ENCODE measurements at regions of chr9 and their contacts with region 1.

Region 1: GRCh38 chr9:95225076-95225725 is 92.3 kb downstream of the FANCC start:
- DNase-seq: no peak
- H3K4me3 Mint-ChIP-seq: no peak overlapping the region
- H3K27ac Mint-ChIP-seq: no peak overlapping the region
- H3K4me1 Mint-ChIP-seq: no peaks in the 10 kb centered on the region
- H3K27me3 Mint-ChIP-seq: no peaks in the 10 kb centered on the region
- CTCF ChIP-seq: no peak

Region 2: GRCh38 chr9:94900222-94901018 is 324.8 kb before region 1 on chr9:
- CTCF ChIA-PET with region 1: no interaction called
- intact Hi-C with region 1: no loop called
- DNase-seq: no peak
- H3K4me3 Mint-ChIP-seq: peak overlapping the region; percentile 43
- H3K27ac Mint-ChIP-seq: peak overlapping the region; percentile 91
- H3K4me1 Mint-ChIP-seq: peaks cover 40% of the 10 kb centered on the region
- H3K27me3 Mint-ChIP-seq: no peaks in the 10 kb centered on the region
- CTCF ChIP-seq: no peak

Region 3: DNA sequence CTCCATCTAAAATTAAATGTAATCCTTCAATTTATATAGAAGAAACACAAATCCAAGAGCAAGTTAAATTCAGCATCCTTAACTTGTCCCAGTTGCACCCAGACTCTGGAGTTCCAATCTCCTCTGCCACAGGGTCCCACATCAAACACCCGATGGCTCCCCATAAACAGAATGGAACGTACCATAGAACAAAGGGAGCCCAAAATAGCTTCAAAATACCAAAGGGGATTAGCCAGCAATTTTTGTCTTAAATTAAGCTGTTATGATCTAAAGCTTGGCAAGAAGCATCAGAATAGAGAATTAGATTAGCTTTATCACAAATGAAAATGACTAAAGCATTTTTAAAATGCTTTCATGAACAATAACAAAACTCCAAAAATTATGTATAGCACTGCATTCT is 20.5 kb before region 1 on chr9:
- CTCF ChIA-PET with region 1: no interaction called
- intact Hi-C with region 1: loop called (anchors 1 kb)
- DNase-seq: no peak
- H3K4me3 Mint-ChIP-seq: no peak overlapping the region
- H3K27ac Mint-ChIP-seq: no peak overlapping the region
- H3K4me1 Mint-ChIP-seq: no peaks in the 10 kb centered on the region
- H3K27me3 Mint-ChIP-seq: no peaks in the 10 kb centered on the region
- CTCF ChIP-seq: no peak

Region 4: DNA sequence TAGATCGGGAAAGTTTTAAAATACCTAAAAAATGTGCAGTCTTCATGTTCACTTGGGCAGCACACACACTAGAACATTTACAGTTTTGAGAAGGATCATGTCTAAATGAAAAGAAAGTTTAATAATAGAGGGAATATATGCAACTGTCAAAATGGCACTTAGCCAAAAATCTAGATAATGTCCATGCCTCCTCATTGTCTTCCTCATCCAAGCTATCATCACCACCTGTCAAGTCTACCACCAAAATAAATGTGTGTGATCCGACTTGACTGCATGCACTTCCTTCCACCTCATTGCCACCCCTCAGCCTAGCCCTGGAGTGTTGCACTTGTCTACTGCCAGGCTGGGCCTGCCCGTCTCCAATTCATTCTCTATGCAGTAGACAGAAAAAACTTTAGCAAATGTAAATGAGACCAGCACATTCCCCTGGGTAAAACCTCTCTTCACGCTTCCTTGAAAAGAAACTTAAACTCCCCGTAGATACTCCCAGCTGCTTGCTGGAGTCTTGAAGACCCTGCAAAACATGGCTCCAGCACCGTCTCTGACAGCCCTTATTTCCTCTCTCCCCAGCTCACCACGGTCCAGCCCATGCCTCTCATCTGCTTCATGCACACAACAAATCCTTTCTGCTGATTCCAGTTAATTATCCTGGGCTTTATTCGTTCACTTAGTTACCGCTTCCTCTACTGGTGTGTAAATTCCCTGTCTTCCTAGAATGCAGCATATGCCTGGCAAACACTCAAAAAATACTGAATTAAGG is 25.4 kb after region 1 on chr9:
- CTCF ChIA-PET with region 1: no interaction called
- intact Hi-C with region 1: no loop called
- DNase-seq: no peak
- H3K4me3 Mint-ChIP-seq: no peak overlapping the region
- H3K27ac Mint-ChIP-seq: no peak overlapping the region
- H3K4me1 Mint-ChIP-seq: no peaks in the 10 kb centered on the region
- H3K27me3 Mint-ChIP-seq: no peaks in the 10 kb centered on the region
- CTCF ChIP-seq: no peak

Region 5: GRCh38 chr9:95273369-95274022 is 48.3 kb after region 1 on chr9:
- CTCF ChIA-PET with region 1: no interaction called
- intact Hi-C with region 1: no loop called
- DNase-seq: no peak
- H3K4me3 Mint-ChIP-seq: no peak overlapping the region
- H3K27ac Mint-ChIP-seq: no peak overlapping the region
- H3K4me1 Mint-ChIP-seq: peaks cover 19% of the 10 kb centered on the region
- H3K27me3 Mint-ChIP-seq: no peaks in the 10 kb centered on the region
- CTCF ChIP-seq: no peak

Measured in Calu3 (cell line).